Posterior vena cava (tissue), 2 donors: ENCODE measurements at regions of chr6 and their contacts with region 1.

Region 1: GRCh38 chr6:143376861-143377260 is 73.6 kb downstream of the ADAT2 start:
- DNase-seq: no peak

Region 2: GRCh38 chr6:143357561-143358255 is 19.2 kb before region 1 on chr6:
- intact Hi-C with region 1: loop called in 1 of 2 experiments (anchors 1 kb)
- DNase-seq: no peak